Heart left ventricle (tissue), 16 donors: ENCODE measurements at regions of chr4 and their contacts with region 1.

Region 1: GRCh38 chr4:11720292-11720691 is 291.6 kb upstream of the HS3ST1 start:
- DNase-seq: no peak
- ATAC-seq: peak in 1 of 4 donors; percentile 42
- H3K4me3 ChIP-seq: no peak overlapping the region
- H3K27ac ChIP-seq: no peak overlapping the region
- H3K4me1 ChIP-seq: peaks cover 0 to 5% (median 0%) of the 10 kb centered on the region in 12 donors
- H3K27me3 ChIP-seq: no peaks in the 10 kb centered on the region
- CTCF ChIP-seq: peak; percentile 60 to 80 (median 72)
- POLR2A ChIP-seq: no peak

Region 2: DNA sequence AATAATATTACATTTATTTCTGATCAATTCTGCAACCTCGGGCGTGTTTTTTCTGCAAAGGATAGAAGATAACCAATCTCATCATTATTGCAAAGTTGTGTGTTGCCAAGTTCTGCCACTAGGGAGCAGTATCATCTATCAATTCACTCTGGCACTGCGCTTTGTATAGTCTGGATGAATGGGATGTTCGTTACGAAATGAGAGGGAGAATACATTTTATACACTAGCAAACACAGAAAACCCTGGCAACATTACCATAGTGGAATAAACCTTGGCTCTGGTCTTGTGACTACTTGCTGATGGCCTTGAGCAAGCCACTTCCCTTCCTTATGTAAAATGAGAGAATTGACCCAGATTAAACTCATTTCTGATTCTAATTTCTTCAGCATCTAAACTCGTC is 1165.6 kb before region 1 on chr4:
- intact Hi-C with region 1: loop called in 4 of 10 experiments (anchors 10 kb)
- DNase-seq: peak in 2 of 5 donors; percentile 16 to 23
- ATAC-seq: peak in 3 of 4 donors; percentile 37 to 74 (median 67)
- H3K4me3 ChIP-seq: no peak overlapping the region
- H3K27ac ChIP-seq: no peak overlapping the region
- H3K4me1 ChIP-seq: no peaks in the 10 kb centered on the region
- H3K27me3 ChIP-seq: peaks cover 0 to 14% (median 0%) of the 10 kb centered on the region in 9 donors
- CTCF ChIP-seq: peak; percentile 58 to 86 (median 76)
- POLR2A ChIP-seq: no peak

Region 3: DNA sequence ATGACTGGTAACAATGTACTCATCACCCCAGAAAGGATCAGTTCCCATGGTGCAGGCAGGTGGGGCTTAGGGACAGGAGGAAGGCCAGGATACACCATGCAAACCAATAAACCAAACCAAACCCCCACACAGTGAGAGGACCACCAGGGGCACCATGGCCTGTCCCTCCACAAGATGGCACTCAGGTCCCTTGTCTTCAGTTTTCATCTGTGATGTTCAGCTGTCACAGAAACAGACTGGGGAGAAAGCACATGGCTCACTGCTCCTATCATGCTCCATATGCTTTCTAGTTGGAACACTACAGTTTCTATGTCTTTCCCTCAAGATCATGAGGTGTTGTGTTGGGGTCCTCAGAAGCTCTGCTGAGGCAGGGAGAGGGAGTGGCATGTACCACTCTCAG is 301.7 kb before region 1 on chr4:
- intact Hi-C with region 1: loop called in 6 of 10 experiments (anchors 5 to 10 kb)
- DNase-seq: no peak
- ATAC-seq: peak in 3 of 4 donors; percentile 30 to 46 (median 36)
- H3K4me3 ChIP-seq: no peak overlapping the region
- H3K27ac ChIP-seq: no peak overlapping the region
- H3K4me1 ChIP-seq: peaks cover 0 to 5% (median 0%) of the 10 kb centered on the region in 12 donors
- H3K27me3 ChIP-seq: no peaks in the 10 kb centered on the region
- CTCF ChIP-seq: peak in 8 of 12 donors; percentile 7 to 43 (median 24)
- POLR2A ChIP-seq: no peak

Region 4: GRCh38 chr4:11428899-11429698 is 291.2 kb before region 1 on chr4:
- intact Hi-C with region 1: loop called in 6 of 10 experiments (anchors 5 to 10 kb)
- DNase-seq: peak; percentile 80 to 90 (median 83)
- ATAC-seq: peak; percentile 81 to 98 (median 96)
- H3K4me3 ChIP-seq: peak overlapping the region; percentile 32 to 75 (median 64)
- H3K27ac ChIP-seq: peak overlapping the region in 8 of 12 donors; percentile 5 to 55 (median 31)
- H3K4me1 ChIP-seq: peaks cover 0 to 27% (median 18%) of the 10 kb centered on the region in 12 donors
- H3K27me3 ChIP-seq: peaks cover 0 to 24% (median 12%) of the 10 kb centered on the region in 9 donors
- CTCF ChIP-seq: peak; percentile 48 to 84 (median 64)
- POLR2A ChIP-seq: no peak

Region 5: GRCh38 chr4:11623726-11624037 is 96.6 kb before region 1 on chr4:
- intact Hi-C with region 1: loop called in 2 of 10 experiments (anchors 10 kb)
- DNase-seq: peak in 2 of 5 donors; percentile 23 to 35
- ATAC-seq: peak in 1 of 4 donors; percentile 41
- H3K4me3 ChIP-seq: no peak overlapping the region
- H3K27ac ChIP-seq: peak overlapping the region in 2 of 12 donors; percentile 62 to 75
- H3K4me1 ChIP-seq: peaks cover 0 to 21% (median 0%) of the 10 kb centered on the region in 12 donors
- H3K27me3 ChIP-seq: no peaks in the 10 kb centered on the region
- CTCF ChIP-seq: peak; percentile 19 to 67 (median 44)
- POLR2A ChIP-seq: no peak

Region 6: DNA sequence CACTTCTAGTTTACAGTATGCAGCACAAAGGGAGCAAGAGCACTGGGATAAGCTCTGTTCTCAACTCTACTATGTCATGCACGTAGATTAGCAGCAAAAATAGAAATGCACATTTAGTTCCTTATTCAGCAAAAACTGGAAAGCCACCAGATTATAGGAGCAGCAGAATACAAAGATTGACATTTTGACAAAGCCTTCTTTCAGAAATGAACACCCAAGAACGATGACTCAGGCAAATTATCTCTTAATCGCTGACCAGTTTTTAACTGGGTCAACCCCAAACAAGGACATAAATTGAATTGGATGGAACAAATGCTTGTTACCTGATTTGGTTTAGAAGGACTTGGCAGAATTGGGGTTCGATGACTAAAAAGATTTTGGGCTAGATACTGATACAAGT is 483.7 kb after region 1 on chr4:
- intact Hi-C with region 1: no loop called
- DNase-seq: no peak
- ATAC-seq: no peak
- H3K4me3 ChIP-seq: no peak overlapping the region
- H3K27ac ChIP-seq: no peak overlapping the region
- H3K4me1 ChIP-seq: no peaks in the 10 kb centered on the region
- H3K27me3 ChIP-seq: no peaks in the 10 kb centered on the region
- CTCF ChIP-seq: no peak
- POLR2A ChIP-seq: no peak